Motor neuron (in vitro differentiated cells): ENCODE measurements at regions of chr4 and their contacts with region 1.

Region 1: GRCh38 chr4:155809835-155810234 is 51.0 kb downstream of the GUCY1B1 start:
- ATAC-seq: peak in 6 of 8 experiments; percentile 57 to 89 (median 73)
- H3K4me3 ChIP-seq: no peak overlapping the region
- H3K27ac ChIP-seq: no peak overlapping the region
- H3K4me1 ChIP-seq: no peaks in the 10 kb centered on the region

Region 2: DNA sequence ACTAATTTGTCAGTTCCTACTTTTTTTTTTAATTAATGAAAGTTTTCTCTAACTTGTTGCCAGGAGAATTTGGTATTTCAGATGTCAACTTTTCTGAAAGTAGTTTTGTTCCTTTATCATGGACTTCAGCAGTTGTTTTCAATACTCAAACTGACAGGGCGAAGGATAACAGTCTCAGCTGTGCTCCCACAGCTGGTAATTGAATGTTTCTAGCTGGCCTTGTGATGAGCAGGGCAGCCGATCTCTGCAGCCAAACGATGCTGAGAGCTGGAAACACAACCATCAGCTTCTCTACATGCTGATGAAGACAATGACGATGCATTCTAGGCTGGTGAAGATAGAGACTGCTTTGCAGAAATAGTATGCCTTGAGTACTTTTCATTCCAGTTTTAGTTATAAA is 303.1 kb before region 1 on chr4:
- in situ Hi-C with region 1: no loop called
- ATAC-seq: no peak
- H3K4me3 ChIP-seq: no peak overlapping the region
- H3K27ac ChIP-seq: no peak overlapping the region
- H3K4me1 ChIP-seq: no peaks in the 10 kb centered on the region

Region 3: DNA sequence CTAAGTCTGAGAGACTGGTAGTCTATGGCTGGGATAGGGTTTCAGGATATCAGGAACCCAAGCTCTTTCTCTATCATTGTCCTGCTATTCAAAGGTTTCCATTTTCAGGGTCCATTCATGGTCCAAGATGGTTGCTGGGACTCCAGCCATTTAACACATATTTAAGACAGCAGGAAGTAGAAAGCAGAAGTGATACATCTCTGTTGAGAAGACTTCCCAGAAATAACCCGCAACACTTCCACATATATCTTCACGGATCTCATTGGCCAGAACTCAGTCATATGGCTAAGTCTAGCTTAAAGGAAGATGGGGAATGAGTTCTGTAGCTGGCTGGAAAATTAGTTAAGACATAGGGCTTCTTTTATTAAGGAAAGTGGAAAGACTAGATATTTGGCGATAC is 120.0 kb after region 1 on chr4:
- in situ Hi-C with region 1: loop called in 1 of 9 experiments (anchors 10 kb)
- ATAC-seq: no peak
- H3K4me3 ChIP-seq: no peak overlapping the region
- H3K27ac ChIP-seq: no peak overlapping the region
- H3K4me1 ChIP-seq: no peaks in the 10 kb centered on the region

Region 4: GRCh38 chr4:155946486-155946885 is 136.7 kb after region 1 on chr4:
- in situ Hi-C with region 1: loop called in 3 of 9 experiments (anchors 5 to 10 kb)
- ATAC-seq: no peak
- H3K4me3 ChIP-seq: no peak overlapping the region
- H3K27ac ChIP-seq: no peak overlapping the region
- H3K4me1 ChIP-seq: peaks cover 0 to 9% of the 10 kb centered on the region in 2 donors

Region 5: DNA sequence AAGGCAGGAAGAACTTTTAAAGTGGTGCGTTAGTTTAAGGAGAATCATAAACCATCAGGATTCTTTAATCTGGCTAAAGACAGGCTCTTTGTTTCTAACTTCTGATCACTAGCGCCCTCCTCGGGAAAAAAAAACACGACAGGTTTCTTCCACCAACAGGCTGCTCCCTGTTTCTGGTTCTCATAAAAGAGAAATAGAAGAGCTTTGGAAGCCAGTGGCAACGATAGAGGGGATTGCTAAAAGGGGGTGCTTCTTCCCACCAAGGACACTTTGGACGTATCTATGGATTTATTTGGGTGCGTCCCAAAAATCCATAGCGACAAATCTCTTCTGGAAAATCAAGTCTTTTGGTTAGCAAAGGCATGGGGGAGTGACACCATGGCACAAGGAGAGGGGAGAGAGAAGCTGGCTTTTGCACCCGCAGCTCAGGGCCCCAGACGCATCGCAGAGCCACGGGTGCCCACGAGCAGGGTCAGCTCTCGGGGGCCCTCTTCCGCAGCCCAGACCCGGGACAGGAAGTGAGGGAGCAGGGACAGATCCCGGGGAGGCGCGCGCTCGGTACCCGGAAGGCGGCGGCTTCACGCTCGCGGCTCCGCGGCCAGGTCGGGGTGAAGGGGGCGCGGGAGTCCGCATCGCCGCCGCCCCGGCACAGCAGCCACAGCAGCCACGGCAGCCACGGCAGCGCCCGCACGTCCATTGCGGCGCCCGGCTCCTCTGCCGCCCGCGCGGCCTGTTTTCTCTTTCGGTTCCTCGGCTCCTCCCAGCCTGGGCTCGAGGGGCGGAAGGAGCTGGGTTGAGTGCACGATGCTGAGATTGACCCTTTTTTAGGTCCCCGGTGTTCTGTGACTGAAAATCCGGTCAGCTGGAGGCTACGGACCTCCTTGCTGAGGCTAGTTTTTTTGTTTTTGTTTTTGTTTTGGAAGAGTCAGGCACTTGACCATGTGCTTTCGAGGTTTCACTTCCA is 143.6 kb after region 1 on chr4 and contains the start of gene CTSO:
- in situ Hi-C with region 1: loop called in 3 of 9 experiments (anchors 5 to 10 kb)
- ATAC-seq: peak; percentile 94 to 99 (median 97)
- H3K4me3 ChIP-seq: peak within 1 kb of the TSS; percentile 39 to 49 (median 47)
- H3K27ac ChIP-seq: peak within 1 kb of the TSS; percentile 59 to 84
- H3K4me1 ChIP-seq: no peaks in the 10 kb centered on the region
- total RNA-seq, gene CTSO: 0.76 to 23.2 (median 6.1) TPM